RWPE1 (cell line): ENCODE measurements at regions of chr2 and their contacts with region 1.

Region 1: GRCh38 chr2:233542507-233542906 is 24.1 kb downstream of the USP40 start:
- DNase-seq: no peak
- H3K27ac ChIP-seq: peak overlapping the region; percentile 39; the same call in 1 of the 2 replicates
- CTCF ChIP-seq: no peak

Region 2: GRCh38 chr2:233489666-233490065 is 52.8 kb before region 1 on chr2:
- CTCF ChIA-PET with region 1: no interaction called
- POLR2A ChIA-PET with region 1: interaction called, 10 read pairs
- DNase-seq: peak; percentile 44
- H3K27ac ChIP-seq: peak overlapping the region; percentile 97
- CTCF ChIP-seq: no peak

Region 3: DNA sequence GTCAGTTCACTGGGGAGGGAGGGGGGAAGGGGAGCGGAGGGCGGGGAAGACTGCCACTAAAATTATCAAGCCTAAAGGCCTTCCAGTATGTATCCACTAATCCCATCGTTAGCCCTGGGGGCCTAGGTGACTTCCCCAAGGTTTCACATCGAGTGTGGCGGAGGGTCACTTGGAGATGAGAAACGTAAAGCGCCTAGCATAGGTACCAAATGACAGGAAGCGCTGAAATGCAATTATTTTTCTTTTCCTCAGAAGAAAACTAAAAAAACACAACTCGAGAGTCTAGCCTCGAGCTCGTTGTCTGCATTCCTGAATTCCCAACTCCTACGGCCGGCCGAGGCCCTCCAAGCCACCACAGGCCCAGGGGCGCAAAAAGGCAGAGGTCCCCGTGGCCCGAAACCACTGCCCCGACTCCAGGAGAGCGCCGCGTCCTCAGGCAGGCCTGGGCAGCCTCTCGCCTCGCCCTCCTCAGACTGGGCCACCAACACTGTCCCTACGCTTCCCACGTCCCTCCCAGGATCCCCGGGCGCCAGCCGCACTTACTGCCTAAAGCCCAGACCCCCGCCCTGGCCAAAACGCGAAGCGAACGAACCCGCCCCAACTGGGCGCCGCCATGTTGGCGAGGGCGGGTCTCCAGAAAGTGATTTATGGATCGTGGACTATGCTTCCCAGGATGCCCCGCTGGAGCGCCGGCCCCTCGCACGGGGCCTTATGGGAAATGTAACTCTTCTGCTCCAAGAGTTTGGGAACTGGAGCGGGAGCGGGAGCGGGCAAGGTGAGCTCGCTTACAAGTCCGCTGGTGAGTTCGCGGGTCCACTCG is 23.8 kb after region 1 on chr2 and contains the start of gene USP40:
- CTCF ChIA-PET with region 1: no interaction called
- POLR2A ChIA-PET with region 1: no interaction called
- DNase-seq: peak; percentile 92
- H3K27ac ChIP-seq: peak within 1 kb of the TSS; percentile 94
- CTCF ChIP-seq: no peak